Uterus (tissue), 4 donors: ENCODE measurements at regions of chr3 and their contacts with region 1.

Region 1: GRCh38 chr3:100802126-100802525 is 92.8 kb downstream of the TFG start:
- DNase-seq: no peak
- H3K4me3 ChIP-seq: no peak overlapping the region
- H3K27ac ChIP-seq: no peak overlapping the region
- H3K4me1 ChIP-seq: no peaks in the 10 kb centered on the region
- H3K27me3 ChIP-seq: no peaks in the 10 kb centered on the region
- CTCF ChIP-seq: no peak
- POLR2A ChIP-seq: no peak

Region 2: GRCh38 chr3:101902041-101902440 is 1099.9 kb after region 1 on chr3:
- intact Hi-C with region 1: loop called (anchors 10 kb)
- DNase-seq: no peak
- H3K4me3 ChIP-seq: no peak overlapping the region
- H3K27ac ChIP-seq: no peak overlapping the region
- H3K4me1 ChIP-seq: no peaks in the 10 kb centered on the region
- H3K27me3 ChIP-seq: no peaks in the 10 kb centered on the region
- CTCF ChIP-seq: no peak
- POLR2A ChIP-seq: no peak